Activated B cell treated with CpG ODN at 0.5 μM for 24 hours (primary cell): ENCODE measurements at regions of chr13 and their contacts with region 1.

Region 1: DNA sequence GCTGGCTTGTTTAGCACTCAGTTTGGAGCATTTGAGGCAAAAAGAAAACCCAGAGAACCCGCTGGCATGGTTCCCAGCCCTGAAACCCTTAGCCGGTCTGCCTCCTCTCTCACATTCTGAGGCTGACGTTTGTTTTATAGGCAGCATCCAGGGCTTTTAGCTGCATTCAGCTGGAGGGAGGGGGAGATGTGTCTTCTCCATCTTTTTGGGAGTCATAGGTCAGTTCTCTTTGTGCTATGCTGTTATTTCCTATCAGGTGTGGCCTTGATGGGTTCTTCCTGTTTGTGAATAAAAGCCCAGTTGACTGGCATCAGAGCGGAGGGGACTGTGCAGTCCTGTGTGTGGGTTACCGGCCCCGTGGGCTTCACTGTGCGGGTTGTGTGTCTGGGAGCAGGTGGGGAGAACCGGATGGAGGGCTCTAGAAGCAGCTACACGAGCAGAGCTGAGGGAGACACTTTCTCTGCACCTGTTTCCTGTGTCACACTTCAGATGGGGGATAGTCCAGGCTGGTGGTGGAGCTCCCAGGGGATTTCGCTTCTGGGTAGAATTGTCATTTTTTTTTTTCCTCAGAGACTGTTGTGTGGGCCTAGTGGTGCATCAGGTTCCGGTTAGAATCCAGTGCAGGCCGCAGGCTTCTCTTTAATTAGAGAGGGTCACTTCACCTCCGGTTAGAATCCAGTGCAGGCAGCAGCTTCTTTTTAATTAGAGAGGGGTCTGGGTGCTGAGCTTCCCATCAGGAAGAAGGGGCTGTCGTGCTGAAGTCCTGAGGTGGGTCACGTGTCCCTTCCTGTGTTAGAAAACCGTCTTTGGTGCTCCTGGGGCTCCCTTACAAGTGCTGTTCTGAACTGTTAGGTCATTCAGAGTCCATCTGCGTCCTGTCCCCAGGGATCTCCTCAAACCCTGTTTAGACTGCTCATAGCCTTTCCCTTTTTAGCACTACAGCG is 69.6 kb downstream of the ARHGEF7 start:
- DNase-seq: peak; percentile 60
- ATAC-seq: peak; percentile 89
- H3K4me3 Mint-ChIP-seq: peak overlapping the region; percentile 80
- H3K27ac Mint-ChIP-seq: peak overlapping the region; percentile 94
- H3K4me1 Mint-ChIP-seq: peaks cover 99% of the 10 kb centered on the region
- H3K27me3 Mint-ChIP-seq: no peaks in the 10 kb centered on the region
- CTCF ChIP-seq: no peak

Region 2: GRCh38 chr13:111066544-111066943 is 118.2 kb before region 1 on chr13:
- CTCF ChIA-PET with region 1: interaction called, 16 read pairs
- POLR2A ChIA-PET with region 1: no interaction called
- intact Hi-C with region 1: no loop called
- DNase-seq: no peak
- ATAC-seq: no peak
- H3K4me3 Mint-ChIP-seq: peak overlapping the region; percentile 67
- H3K27ac Mint-ChIP-seq: no peak overlapping the region
- H3K4me1 Mint-ChIP-seq: peaks cover 10% of the 10 kb centered on the region
- H3K27me3 Mint-ChIP-seq: peaks cover 33% of the 10 kb centered on the region
- CTCF ChIP-seq: no peak

Region 3: DNA sequence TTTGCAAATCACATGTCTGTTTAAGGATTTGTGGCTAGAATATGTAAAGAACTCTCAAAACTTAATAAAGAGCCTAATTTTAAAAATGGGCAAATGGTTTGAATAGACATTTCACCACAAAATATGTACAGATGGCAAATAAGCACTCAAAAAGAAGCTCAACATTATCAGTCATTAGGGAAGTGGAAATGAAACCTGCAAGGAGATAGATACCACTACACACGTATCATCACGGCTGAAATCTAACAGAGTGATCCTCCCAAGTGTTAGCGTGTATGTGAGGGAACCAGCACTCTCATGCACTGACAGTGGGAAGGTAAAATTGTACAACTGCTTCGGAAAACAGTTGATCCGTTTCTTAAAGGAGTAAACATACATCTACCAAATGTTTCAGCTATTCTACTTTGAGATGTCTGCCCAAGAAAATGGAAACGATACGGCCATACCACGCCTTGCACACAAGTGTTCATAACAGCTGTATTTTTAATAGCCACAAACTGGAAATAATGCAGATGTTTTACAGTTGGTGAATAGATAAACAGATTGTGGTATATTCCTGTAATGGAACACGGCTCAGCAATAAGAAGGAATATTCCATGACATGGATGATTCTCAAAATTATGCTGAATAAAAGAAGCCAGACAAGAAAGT is 55.1 kb before region 1 on chr13:
- CTCF ChIA-PET with region 1: no interaction called
- POLR2A ChIA-PET with region 1: interaction called, 3 read pairs
- intact Hi-C with region 1: loop called (anchors 2 kb)
- DNase-seq: no peak
- ATAC-seq: peak; percentile 96
- H3K4me3 Mint-ChIP-seq: peak overlapping the region; percentile 63
- H3K27ac Mint-ChIP-seq: peak overlapping the region; percentile 62
- H3K4me1 Mint-ChIP-seq: peaks cover 11% of the 10 kb centered on the region
- H3K27me3 Mint-ChIP-seq: peaks cover 6% of the 10 kb centered on the region
- CTCF ChIP-seq: no peak

Region 4: GRCh38 chr13:111153279-111153976 is 31.3 kb before region 1 on chr13:
- CTCF ChIA-PET with region 1: no interaction called
- POLR2A ChIA-PET with region 1: interaction called, 17 read pairs
- intact Hi-C with region 1: loop called (anchors 1 kb)
- DNase-seq: peak; percentile 98
- ATAC-seq: peak; percentile 85
- H3K4me3 Mint-ChIP-seq: peak overlapping the region; percentile 92
- H3K27ac Mint-ChIP-seq: peak overlapping the region; percentile 88
- H3K4me1 Mint-ChIP-seq: peaks cover 30% of the 10 kb centered on the region
- H3K27me3 Mint-ChIP-seq: no peaks in the 10 kb centered on the region
- CTCF ChIP-seq: no peak

Region 5: DNA sequence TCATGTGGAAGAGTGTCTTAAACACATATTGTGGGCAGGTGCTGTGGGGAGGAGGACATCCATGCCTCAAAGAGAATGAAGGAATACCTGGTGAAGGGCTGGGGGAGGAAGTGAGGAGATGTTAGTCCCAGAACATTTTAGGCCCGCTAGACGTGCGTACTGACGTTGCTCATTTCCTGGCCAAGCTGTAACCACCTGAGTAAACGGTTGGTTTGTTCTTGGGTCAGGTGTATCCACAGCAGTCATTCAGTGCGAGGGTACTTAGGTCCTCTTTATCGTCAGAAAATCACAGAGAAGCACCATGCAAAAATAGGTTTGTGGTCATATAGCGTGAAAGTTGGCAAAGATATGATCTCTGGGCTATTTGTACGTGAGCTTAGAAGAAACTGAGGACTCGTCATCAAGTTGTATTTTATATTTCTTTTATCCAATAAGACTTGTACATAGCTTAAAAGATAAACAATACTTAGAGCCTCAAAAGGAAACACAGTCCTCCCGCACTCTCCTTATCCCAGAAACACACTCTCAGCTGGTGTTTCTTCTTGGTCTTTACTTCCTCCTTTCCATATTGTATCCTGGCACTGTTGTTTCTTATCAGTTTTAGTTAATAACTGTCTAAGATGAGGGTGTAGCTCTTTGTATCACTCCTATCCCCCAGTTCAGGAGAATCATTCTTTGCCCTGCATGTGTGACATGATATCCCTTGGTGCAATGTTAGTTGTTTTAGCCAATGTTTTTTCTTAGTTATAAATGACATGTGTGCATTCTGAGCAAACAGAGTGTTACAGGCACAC is 17.7 kb before region 1 on chr13:
- CTCF ChIA-PET with region 1: interaction called, 3 read pairs
- POLR2A ChIA-PET with region 1: interaction called, 8 read pairs
- intact Hi-C with region 1: loop called (anchors 1 kb)
- DNase-seq: no peak
- ATAC-seq: peak; percentile 67
- H3K4me3 Mint-ChIP-seq: peak overlapping the region; percentile 55
- H3K27ac Mint-ChIP-seq: peak overlapping the region; percentile 80
- H3K4me1 Mint-ChIP-seq: peaks cover 91% of the 10 kb centered on the region
- H3K27me3 Mint-ChIP-seq: no peaks in the 10 kb centered on the region
- CTCF ChIP-seq: no peak

Region 6: DNA sequence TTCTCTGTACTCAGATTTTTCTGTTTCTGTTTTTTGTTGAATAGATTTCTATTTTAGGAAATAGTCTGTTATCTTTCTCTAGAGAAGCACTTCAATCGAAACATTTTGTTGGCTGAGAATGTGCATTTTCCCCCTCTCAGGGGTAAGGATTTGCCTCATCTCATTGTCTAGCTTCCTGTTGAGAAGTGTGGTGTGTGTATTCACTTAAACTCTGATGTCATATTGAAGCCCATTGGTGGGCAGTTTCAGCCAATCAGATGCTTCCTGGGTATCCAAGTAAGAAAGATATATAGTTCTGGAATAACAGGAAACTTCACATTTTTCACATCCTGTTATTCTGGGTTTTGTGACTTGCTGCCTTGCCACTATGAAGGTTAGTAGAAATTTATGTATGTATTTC is 18.0 kb after region 1 on chr13:
- CTCF ChIA-PET with region 1: interaction called, 5 read pairs
- POLR2A ChIA-PET with region 1: interaction called, 21 read pairs
- intact Hi-C with region 1: loop called (anchors 1 kb)
- DNase-seq: no peak
- ATAC-seq: peak; percentile 49
- H3K4me3 Mint-ChIP-seq: peak overlapping the region; percentile 28
- H3K27ac Mint-ChIP-seq: peak overlapping the region; percentile 74
- H3K4me1 Mint-ChIP-seq: peaks cover 87% of the 10 kb centered on the region
- H3K27me3 Mint-ChIP-seq: no peaks in the 10 kb centered on the region
- CTCF ChIP-seq: no peak

Region 7: DNA sequence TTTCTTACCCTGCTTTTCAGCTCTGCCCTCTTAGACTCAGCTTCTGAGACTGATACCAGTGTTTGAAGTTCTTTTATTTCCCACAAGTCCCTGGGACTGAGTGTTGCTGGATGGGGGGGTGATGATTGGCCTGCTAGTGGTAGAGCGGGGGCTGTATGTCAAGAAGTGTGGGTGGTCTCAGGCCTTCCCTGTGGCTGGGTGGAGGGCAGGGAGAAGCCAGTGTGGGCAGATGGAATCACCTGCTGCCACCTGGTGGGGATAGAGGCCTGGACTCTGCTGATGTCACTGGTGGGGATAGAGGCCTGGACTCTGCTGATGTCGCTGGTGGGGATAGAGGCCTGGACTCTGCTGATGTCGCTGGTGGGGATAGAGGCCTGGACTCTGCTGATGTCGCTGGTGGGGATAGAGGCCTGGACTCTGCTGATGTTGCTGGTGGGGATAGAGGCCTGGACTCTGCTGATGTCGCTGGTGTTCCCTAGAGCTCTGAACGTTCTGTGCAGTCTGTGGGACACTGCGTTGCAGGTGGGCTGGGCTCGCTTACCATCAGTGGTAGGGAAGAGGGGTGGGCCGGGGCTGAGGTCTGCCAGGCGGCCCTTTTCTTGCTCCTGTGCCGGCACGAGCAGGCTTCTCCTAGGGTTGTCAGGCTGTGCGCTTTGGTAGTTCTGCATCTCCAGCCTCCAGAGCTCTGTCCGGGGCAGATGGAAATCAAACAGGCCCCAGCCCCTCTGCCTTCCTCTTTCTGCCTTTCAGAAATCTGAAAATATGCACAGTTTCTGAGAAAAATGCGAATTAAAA is 31.6 kb after region 1 on chr13:
- CTCF ChIA-PET with region 1: interaction called, 22 read pairs
- POLR2A ChIA-PET with region 1: no interaction called
- intact Hi-C with region 1: loop called (anchors 1 kb)
- DNase-seq: no peak
- ATAC-seq: peak; percentile 60
- H3K4me3 Mint-ChIP-seq: no peak overlapping the region
- H3K27ac Mint-ChIP-seq: peak overlapping the region; percentile 59
- H3K4me1 Mint-ChIP-seq: peaks cover 38% of the 10 kb centered on the region
- H3K27me3 Mint-ChIP-seq: no peaks in the 10 kb centered on the region
- CTCF ChIP-seq: no peak